Heart left ventricle (tissue), 16 donors: ENCODE measurements at regions of chr14 and their contacts with region 1.

Region 1: DNA sequence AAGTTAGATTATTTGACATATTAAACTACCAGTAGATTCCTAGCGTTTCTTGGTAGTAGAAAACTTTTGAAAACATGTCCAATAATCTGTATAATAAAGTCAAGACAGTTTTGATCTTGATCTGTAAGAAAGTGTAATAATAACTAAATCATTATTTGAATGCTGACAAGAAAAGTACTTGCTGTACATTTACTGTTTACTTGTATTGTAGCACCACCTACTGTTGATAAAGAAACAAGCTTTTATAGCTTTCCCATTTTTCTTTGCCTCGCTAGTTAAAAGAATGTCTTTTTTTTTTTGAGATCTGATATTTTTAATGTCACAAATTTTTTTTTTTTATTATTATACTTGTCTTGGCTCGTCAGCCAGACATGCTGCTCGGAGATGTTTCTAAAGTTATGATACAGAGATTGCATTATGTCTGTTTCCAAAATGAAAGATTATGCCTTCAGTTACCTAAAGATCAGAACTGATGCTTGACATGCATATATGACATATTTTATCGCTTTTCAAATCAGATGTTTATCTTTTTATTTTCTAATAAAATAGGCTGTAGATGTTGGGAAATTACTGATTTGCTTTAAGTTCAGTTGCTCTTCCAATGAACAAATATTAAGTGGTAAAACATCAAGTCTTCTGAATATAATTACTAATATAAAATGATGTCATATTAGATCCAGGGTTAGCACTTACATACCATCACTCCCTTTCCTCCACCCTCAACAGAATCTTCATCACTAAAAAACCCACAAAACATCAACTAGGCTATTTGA is 140.5 kb downstream of the AKAP6 start:
- DNase-seq: no peak
- ATAC-seq: peak in 2 of 4 donors; percentile 27 to 53
- H3K4me3 ChIP-seq: no peak overlapping the region
- H3K27ac ChIP-seq: peak overlapping the region in 10 of 12 donors; percentile 29 to 88 (median 72)
- H3K4me1 ChIP-seq: peaks cover 0 to 59% (median 23%) of the 10 kb centered on the region in 12 donors
- H3K27me3 ChIP-seq: no peaks in the 10 kb centered on the region
- CTCF ChIP-seq: peak; percentile 24 to 71 (median 62)
- POLR2A ChIP-seq: no peak

Region 2: DNA sequence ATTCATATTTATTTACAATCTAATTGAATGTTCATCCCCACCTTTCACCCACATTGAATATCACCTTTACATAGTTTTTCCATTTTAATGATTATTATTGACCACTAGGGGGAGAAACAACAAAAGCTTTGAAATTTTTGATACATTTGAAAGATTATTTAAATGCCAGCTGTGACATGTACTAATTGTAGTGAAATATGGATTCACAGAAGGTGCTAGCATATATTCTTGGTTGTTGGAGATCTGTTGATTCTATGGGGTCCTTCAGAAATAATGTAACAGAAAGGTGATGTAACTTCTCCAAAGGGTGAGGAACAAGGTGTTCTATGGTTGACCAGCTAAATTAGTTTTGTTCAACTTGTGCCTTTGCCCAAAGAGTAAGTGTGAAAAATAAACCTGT is 959.4 kb before region 1 on chr14:
- intact Hi-C with region 1: loop called in 1 of 10 experiments (anchors 5 kb)
- DNase-seq: no peak
- ATAC-seq: peak in 1 of 4 donors; percentile 22
- H3K4me3 ChIP-seq: no peak overlapping the region
- H3K27ac ChIP-seq: no peak overlapping the region
- H3K4me1 ChIP-seq: peaks cover 0 to 13% (median 8%) of the 10 kb centered on the region in 12 donors
- H3K27me3 ChIP-seq: no peaks in the 10 kb centered on the region
- CTCF ChIP-seq: peak; percentile 52 to 90 (median 68)
- POLR2A ChIP-seq: no peak

Region 3: GRCh38 chr14:31937721-31938346 is 531.7 kb before region 1 on chr14:
- intact Hi-C with region 1: loop called in 3 of 10 experiments (anchors 5 to 10 kb)
- DNase-seq: peak; percentile 46 to 77 (median 60)
- ATAC-seq: peak; percentile 65 to 93 (median 88)
- H3K4me3 ChIP-seq: no peak overlapping the region
- H3K27ac ChIP-seq: no peak overlapping the region
- H3K4me1 ChIP-seq: peaks cover 0 to 30% (median 14%) of the 10 kb centered on the region in 12 donors
- H3K27me3 ChIP-seq: no peaks in the 10 kb centered on the region
- CTCF ChIP-seq: no peak
- POLR2A ChIP-seq: no peak

Region 4: DNA sequence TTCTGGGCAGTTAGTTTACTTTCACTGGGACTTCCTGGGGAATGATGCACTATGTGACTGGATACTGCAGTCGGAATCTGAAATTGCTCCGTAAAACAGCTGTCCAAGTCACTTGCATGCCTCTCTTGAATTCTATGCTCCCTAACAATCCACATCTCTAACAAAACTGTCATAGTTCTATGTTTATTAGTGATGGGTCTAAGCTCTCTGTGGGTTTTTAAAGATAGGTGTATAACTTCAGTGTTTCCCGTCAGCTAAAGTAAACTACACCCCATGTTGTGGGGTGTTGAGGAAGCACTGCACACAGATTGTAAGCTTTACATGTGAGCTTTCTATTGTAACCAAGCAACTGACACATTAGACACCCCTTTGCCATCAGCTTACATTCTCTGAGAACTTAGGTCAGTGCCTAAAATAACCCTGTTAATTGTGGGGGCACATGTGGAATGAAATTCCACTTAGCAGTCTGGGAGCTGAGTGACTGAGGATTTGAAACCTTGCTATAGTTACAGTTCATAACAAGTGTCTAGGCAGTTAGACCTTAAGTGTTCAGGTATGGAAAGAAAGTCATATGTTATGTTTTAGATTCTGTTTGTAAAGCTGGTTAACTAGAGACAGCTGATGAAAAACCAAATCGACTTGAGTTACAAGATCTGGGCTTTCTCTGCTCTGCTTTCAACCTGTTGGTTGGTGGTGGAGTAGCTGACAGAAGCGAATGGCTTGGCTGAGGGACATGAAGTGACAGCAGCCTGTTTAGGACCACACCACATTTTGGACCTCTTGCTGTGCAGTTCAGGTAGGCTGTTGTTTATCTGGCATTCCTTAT is 25.2 kb after region 1 on chr14:
- intact Hi-C with region 1: loop called in 2 of 10 experiments (anchors 2 kb)
- DNase-seq: peak in 3 of 5 donors; percentile 21 to 37 (median 35)
- ATAC-seq: peak; percentile 88 to 93 (median 92)
- H3K4me3 ChIP-seq: peak overlapping the region; percentile 21 to 64 (median 52)
- H3K27ac ChIP-seq: peak overlapping the region; percentile 53 to 93 (median 84)
- H3K4me1 ChIP-seq: peaks cover 0 to 41% (median 21%) of the 10 kb centered on the region in 12 donors
- H3K27me3 ChIP-seq: no peaks in the 10 kb centered on the region
- CTCF ChIP-seq: no peak
- POLR2A ChIP-seq: peak in 1 of 2 donors; percentile 53

Region 5: DNA sequence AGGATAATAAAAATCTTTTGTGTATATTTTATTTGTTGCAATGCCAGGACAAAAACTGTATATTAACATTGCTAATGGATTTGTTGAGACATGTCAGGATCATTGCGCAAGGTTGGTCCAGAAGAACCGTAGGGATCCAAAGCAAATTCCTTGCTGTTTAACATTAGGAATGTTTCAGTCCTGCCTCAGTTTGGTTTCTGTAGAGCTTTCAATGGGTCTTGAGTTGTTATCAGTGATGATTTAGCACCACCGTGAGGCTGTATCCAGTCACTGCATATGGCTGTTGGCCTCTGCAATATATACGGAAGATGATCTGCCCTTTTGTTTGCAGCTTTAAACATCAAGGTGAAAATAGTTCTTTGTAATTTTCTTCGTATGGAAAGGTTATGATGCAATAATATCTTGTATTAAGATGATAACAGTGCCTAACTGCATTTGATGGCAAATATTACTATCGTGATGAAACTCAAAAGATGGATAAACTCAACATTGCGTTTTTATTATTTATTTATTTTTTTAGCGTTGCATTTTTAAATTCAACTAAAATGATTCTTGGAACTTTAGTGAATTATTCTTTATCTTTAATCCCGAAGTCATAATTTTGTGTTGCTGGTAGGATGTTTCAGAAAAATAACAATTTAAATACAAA is 90.8 kb after region 1 on chr14:
- intact Hi-C with region 1: loop called in 1 of 10 experiments (anchors 5 kb)
- DNase-seq: peak in 3 of 5 donors; percentile 29 to 42 (median 39)
- ATAC-seq: peak; percentile 46 to 83 (median 73)
- H3K4me3 ChIP-seq: no peak overlapping the region
- H3K27ac ChIP-seq: peak overlapping the region in 10 of 12 donors; percentile 9 to 71 (median 44)
- H3K4me1 ChIP-seq: peaks cover 0 to 54% (median 21%) of the 10 kb centered on the region in 12 donors
- H3K27me3 ChIP-seq: no peaks in the 10 kb centered on the region
- CTCF ChIP-seq: peak; percentile 67 to 92 (median 80)
- POLR2A ChIP-seq: no peak

Region 6: GRCh38 chr14:32669391-32669790 is 199.8 kb after region 1 on chr14:
- intact Hi-C with region 1: no loop called
- DNase-seq: no peak
- ATAC-seq: no peak
- H3K4me3 ChIP-seq: no peak overlapping the region
- H3K27ac ChIP-seq: no peak overlapping the region
- H3K4me1 ChIP-seq: peaks cover 0 to 8% (median 0%) of the 10 kb centered on the region in 12 donors
- H3K27me3 ChIP-seq: no peaks in the 10 kb centered on the region
- CTCF ChIP-seq: no peak
- POLR2A ChIP-seq: no peak